Pancreas (tissue), 10 donors: ENCODE measurements at regions of chr10 and their contacts with region 1.

Region 1: GRCh38 chr10:129030996-129031843 is 435.8 kb upstream of the MGMT start:
- DNase-seq: peak in 5 of 6 donors; percentile 20 to 79 (median 52)
- ATAC-seq: peak; percentile 67 to 97 (median 93)
- H3K4me3 ChIP-seq: no peak overlapping the region
- H3K27ac ChIP-seq: no peak overlapping the region
- H3K4me1 ChIP-seq: no peaks in the 10 kb centered on the region
- H3K27me3 ChIP-seq: peaks cover 0 to 52% (median 7%) of the 10 kb centered on the region in 4 donors
- CTCF ChIP-seq: peak; percentile 57 to 83 (median 68)

Region 2: GRCh38 chr10:127840884-127841283 is 1190.3 kb before region 1 on chr10:
- intact Hi-C with region 1: no loop called
- DNase-seq: no peak
- ATAC-seq: peak in 1 of 4 donors; percentile 40
- H3K4me3 ChIP-seq: no peak overlapping the region
- H3K27ac ChIP-seq: no peak overlapping the region
- H3K4me1 ChIP-seq: no peaks in the 10 kb centered on the region
- H3K27me3 ChIP-seq: no peaks in the 10 kb centered on the region
- CTCF ChIP-seq: no peak

Region 3: GRCh38 chr10:129123428-129123827 is 92.2 kb after region 1 on chr10:
- intact Hi-C with region 1: no loop called
- DNase-seq: no peak
- ATAC-seq: no peak
- H3K4me3 ChIP-seq: no peak overlapping the region
- H3K27ac ChIP-seq: no peak overlapping the region
- H3K4me1 ChIP-seq: no peaks in the 10 kb centered on the region
- H3K27me3 ChIP-seq: no peaks in the 10 kb centered on the region
- CTCF ChIP-seq: no peak

Region 4: GRCh38 chr10:129756912-129757901 is 726.0 kb after region 1 on chr10:
- intact Hi-C with region 1: no loop called
- DNase-seq: peak in 4 of 6 donors; percentile 13 to 27 (median 20)
- ATAC-seq: peak in 3 of 4 donors; percentile 59 to 78 (median 71)
- H3K4me3 ChIP-seq: peak overlapping the region in 1 of 4 donors; percentile 4
- H3K27ac ChIP-seq: peak overlapping the region in 2 of 4 donors; percentile 8 to 33
- H3K4me1 ChIP-seq: no peaks in the 10 kb centered on the region
- H3K27me3 ChIP-seq: no peaks in the 10 kb centered on the region
- CTCF ChIP-seq: no peak

Region 5: DNA sequence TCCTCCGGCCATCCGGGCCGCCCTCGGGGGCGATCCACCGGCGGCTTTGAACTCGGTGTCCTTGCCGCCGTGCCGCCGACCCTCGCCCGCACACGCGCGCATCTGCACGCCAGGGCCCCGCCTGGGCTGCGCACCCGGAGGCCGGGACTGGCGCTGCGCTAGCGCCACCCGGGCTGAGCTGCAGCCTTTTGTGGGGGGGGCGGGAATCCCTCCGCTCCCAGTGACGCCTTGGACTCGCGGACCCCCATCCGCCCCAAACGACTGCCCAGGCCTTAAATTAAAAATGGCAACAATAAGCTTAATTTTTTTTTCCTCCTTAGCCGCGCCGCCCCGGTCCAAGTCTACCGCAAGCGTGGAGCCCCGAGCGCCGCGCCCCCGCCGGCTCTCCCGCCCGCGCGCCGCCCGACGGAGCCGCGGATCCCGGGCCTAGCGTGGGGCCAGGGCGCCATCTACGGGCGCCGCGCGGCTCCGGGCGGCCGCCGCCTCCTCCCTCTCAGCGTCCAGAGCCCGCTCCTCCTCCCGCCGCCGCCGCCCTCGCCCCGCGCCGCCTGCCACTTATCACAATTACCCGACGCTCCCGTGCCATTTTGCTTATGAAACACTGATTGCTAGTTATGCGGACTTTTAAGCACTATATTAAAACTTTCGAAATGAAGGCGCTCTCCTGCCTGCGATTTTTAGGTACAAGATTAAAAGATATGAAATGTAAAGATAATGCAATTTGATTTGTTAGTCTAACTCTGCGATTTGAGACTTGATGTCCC is 940.3 kb after region 1 on chr10:
- intact Hi-C with region 1: loop called in 1 of 3 experiments (anchors 5 kb)
- DNase-seq: peak in 4 of 6 donors; percentile 37 to 85 (median 60)
- ATAC-seq: peak; percentile 84 to 95 (median 93)
- H3K4me3 ChIP-seq: peak overlapping the region in 2 of 4 donors; percentile 18 to 43
- H3K27ac ChIP-seq: no peak overlapping the region
- H3K4me1 ChIP-seq: peaks cover 0 to 5% (median 0%) of the 10 kb centered on the region in 3 donors
- H3K27me3 ChIP-seq: peaks cover 0 to 73% (median 22%) of the 10 kb centered on the region in 4 donors
- CTCF ChIP-seq: peak in 3 of 4 donors; percentile 11 to 27 (median 13)